WTC11 (cell line): ENCODE measurements at regions of chr16 and their contacts with region 1.

Region 1: GRCh38 chr16:89171463-89172170 is at the start of gene CDH15:
- DNase-seq: peak; percentile 99
- ATAC-seq: peak; percentile 88
- H3K4me3 Mint-ChIP-seq: peak within 1 kb of the TSS; percentile 75
- H3K27ac Mint-ChIP-seq: 0 out of 2 replicates have a peak within 1 kb of the TSS, but pooled peaks have one; percentile 2
- H3K4me1 Mint-ChIP-seq: peaks cover 14% of the 10 kb centered on the region
- H3K27me3 Mint-ChIP-seq: peaks cover 6% of the 10 kb centered on the region; the same call in 1 of the 2 replicates
- CTCF ChIP-seq: no peak
- total RNA-seq, gene CDH15: 0.41 to 0.76 TPM (median 0.46 TPM) in 3 replicates

Region 2: GRCh38 chr16:88743693-88744576 is 427.7 kb before region 1 on chr16:
- CTCF ChIA-PET with region 1: no interaction called
- POLR2A ChIA-PET with region 1: no interaction called
- DNase-seq: peak; percentile 94
- ATAC-seq: peak; percentile 63
- H3K4me3 Mint-ChIP-seq: no peak overlapping the region
- H3K27ac Mint-ChIP-seq: peak overlapping the region; percentile 70; the same call in 1 of the 2 replicates
- H3K4me1 Mint-ChIP-seq: peaks cover 13% of the 10 kb centered on the region
- H3K27me3 Mint-ChIP-seq: no peaks in the 10 kb centered on the region
- CTCF ChIP-seq: peak; percentile 94

Region 3: DNA sequence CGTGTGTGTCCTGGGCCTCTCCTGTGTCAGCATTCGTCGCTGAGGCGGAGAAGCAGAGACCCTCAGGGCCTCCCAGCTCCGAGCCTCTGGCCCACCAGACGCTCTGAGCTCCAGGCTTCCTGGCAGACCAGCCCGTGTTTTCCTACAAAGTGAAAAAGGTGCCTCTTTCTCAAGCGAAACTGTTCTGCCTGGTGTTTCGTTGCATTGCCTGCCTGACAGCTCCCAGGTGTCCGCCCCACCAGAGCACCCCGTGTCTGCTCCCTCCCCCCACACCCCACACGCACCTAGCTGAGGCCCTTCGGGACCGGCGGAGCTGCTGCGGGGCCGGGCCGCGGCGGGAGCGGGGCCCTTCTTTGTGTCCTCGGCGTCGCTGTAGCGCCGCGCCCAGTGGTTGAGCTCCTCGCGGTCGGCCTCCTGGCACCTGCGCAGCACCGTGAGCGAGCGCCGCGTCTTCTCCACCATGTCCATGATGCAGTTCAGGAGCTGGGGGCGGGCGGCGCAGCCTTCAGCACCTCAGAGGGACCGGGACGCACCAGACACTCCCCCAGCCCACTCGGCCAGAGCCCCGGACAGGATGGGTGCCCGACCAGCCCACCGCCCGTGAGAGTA is 290.5 kb before region 1 on chr16:
- CTCF ChIA-PET with region 1: interaction called, 14 read pairs
- POLR2A ChIA-PET with region 1: no interaction called
- DNase-seq: peak; percentile 41
- ATAC-seq: peak; percentile 51
- H3K4me3 Mint-ChIP-seq: no peak overlapping the region
- H3K27ac Mint-ChIP-seq: no peak overlapping the region
- H3K4me1 Mint-ChIP-seq: no peaks in the 10 kb centered on the region
- H3K27me3 Mint-ChIP-seq: no peaks in the 10 kb centered on the region; the same call in 1 of the 2 replicates
- CTCF ChIP-seq: no peak

Region 4: DNA sequence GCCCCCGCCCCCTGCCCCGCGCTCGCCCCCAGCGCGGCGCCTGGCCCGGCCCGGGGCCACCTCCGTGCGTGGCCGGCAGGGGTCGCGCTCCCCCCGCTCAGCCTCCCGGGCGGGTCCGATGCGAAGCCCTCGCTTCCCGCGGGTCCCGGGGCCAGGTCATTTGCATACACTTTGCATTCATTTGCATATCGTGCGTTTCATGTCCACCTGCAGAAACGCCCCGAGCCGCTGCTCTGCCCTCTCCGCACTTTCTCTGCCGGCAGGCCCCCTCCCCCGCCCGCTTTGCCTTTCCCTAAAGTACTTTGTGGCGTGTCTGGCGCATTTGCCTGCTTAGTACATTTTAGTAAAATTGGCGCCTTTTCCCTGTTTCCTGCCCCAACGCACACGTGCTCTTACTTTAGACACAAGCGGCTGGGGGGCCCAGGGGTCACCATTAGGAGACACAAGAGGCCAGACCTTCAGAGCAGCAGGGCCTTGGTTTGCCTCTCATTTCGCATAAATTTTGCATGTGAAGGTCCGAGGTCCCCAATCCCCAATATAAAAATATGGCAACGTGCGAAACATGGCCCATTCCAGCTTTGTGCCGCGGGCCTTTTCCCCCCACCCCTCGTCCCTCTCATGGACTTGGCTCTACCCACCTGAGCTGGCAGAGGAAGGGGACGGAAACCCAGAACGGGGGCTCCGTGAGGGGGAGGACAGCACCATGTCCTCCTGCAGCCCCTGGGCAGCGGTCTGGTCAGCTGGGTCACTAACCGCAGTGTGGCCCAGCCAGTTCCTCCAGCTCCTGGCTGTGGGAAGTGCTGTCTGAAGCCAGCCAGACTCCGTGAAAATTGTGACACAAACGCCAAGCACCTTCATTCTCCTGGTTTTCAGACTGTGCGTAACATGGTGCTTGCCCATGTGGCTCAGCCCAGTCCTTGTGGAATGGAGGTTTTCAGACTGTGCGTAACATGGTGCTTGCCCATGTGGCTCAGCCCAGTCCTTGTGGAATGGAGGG is 229.4 kb before region 1 on chr16:
- CTCF ChIA-PET with region 1: interaction called, 13 read pairs
- POLR2A ChIA-PET with region 1: no interaction called
- DNase-seq: peak; percentile 83
- ATAC-seq: peak; percentile 82
- H3K4me3 Mint-ChIP-seq: peak overlapping the region; percentile 58
- H3K27ac Mint-ChIP-seq: no peak overlapping the region
- H3K4me1 Mint-ChIP-seq: no peaks in the 10 kb centered on the region
- H3K27me3 Mint-ChIP-seq: peaks cover 29% of the 10 kb centered on the region
- CTCF ChIP-seq: peak; percentile 83

Region 5: DNA sequence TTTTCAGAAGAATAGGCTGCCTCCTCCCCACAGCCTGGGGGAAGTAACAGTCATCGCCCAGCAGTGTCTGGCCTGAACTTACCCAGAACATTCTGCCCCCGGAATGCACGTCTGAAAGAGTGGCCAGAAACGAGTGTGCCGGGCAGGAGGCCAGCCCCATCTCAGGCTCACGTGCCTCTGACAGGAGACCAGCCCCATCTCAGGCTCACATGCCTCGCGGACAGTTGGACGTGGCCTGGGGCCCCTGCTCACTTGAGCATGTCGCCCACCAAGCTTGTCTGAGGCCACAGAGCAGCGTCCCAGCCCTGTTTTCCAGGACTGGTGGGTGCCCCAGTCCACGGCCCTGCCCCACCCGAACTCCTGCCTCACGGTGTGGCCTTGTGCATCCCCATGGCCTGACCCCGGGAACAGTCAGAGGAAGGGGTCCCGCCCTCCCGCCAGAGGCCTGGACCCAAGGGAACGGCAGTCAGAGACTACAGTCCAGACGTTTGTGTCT is 16.4 kb before region 1 on chr16:
- CTCF ChIA-PET with region 1: interaction called, 13 read pairs
- POLR2A ChIA-PET with region 1: no interaction called
- DNase-seq: no peak
- ATAC-seq: no peak
- H3K4me3 Mint-ChIP-seq: no peak overlapping the region
- H3K27ac Mint-ChIP-seq: no peak overlapping the region
- H3K4me1 Mint-ChIP-seq: no peaks in the 10 kb centered on the region
- H3K27me3 Mint-ChIP-seq: peaks cover 5% of the 10 kb centered on the region
- CTCF ChIP-seq: no peak

Region 6: GRCh38 chr16:89193021-89193575 is 21.5 kb after region 1 on chr16:
- CTCF ChIA-PET with region 1: interaction called, 21 read pairs
- POLR2A ChIA-PET with region 1: interaction called, 6 read pairs
- DNase-seq: peak; percentile 90
- ATAC-seq: peak; percentile 78
- H3K4me3 Mint-ChIP-seq: no peak overlapping the region
- H3K27ac Mint-ChIP-seq: no peak overlapping the region
- H3K4me1 Mint-ChIP-seq: no peaks in the 10 kb centered on the region
- H3K27me3 Mint-ChIP-seq: peaks cover 3% of the 10 kb centered on the region
- CTCF ChIP-seq: no peak

Region 7: DNA sequence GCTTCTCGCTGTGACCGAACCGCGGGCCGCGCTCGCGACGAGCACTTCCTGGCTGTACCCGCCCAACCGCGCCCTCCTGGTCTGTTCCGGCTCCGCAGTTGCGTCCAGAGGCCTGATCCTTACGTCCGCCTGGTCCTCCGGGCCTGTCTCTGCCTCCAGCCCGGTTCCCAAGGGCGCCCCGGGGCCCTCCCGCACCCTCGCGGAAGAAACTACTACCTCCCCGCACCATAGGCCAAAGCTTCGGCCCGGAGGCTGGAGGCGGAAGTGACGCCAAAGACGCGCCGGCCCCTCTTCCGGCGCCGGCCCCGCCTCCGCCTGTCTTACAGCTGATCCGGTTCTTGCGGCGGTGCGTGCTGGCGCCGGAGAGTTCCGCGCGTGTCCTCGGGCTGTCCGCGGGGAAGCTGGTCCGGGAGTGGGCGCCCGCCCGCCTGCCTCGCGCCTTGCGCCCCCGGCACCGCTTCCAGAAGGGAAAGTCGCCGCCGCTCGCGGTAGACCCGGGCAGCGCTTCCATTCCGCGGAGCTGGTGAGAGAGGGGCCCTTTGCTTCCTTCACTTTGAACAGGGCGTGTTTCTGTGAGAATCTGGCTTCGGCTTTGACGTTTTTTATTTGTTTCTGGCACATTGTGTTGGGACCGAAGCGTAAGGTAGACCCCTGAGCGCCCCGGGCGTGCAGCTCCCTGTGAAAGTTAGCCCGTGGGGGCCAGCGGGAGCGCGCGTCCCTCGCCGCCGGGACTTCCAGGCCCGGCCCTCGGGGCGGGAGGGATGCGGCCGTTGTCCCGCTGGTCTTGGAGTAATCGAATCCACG is 46.0 kb after region 1 on chr16 and contains the start of gene ZNF778:
- CTCF ChIA-PET with region 1: interaction called, 13 read pairs
- POLR2A ChIA-PET with region 1: no interaction called
- DNase-seq: peak; percentile 71
- ATAC-seq: peak; percentile 78
- H3K4me3 Mint-ChIP-seq: peak within 1 kb of the TSS; percentile 87
- H3K27ac Mint-ChIP-seq: peak within 1 kb of the TSS; percentile 91
- H3K4me1 Mint-ChIP-seq: peaks cover 11% of the 10 kb centered on the region
- H3K27me3 Mint-ChIP-seq: no peaks in the 10 kb centered on the region
- CTCF ChIP-seq: no peak
- total RNA-seq, gene ZNF778: 15.5 to 31.2 TPM (median 15.6 TPM) in 3 replicates